A549 (cell line): ENCODE measurements at regions of chr1 and their contacts with region 1.

Region 1: GRCh38 chr1:16625497-16626408 is 12.4 kb upstream of the NBPF1 start:
- DNase-seq: no peak
- ATAC-seq: no peak; a peak in 1 of 6 replicates
- H3K4me3 ChIP-seq: no peak overlapping the region
- H3K27ac ChIP-seq: no peak overlapping the region
- H3K4me1 ChIP-seq: peaks cover 6% of the 10 kb centered on the region
- CTCF ChIP-seq: no peak
- EP300 ChIP-seq: no peak
- POLR2A ChIP-seq: no peak
- RAD21 ChIP-seq: no peak

Region 2: DNA sequence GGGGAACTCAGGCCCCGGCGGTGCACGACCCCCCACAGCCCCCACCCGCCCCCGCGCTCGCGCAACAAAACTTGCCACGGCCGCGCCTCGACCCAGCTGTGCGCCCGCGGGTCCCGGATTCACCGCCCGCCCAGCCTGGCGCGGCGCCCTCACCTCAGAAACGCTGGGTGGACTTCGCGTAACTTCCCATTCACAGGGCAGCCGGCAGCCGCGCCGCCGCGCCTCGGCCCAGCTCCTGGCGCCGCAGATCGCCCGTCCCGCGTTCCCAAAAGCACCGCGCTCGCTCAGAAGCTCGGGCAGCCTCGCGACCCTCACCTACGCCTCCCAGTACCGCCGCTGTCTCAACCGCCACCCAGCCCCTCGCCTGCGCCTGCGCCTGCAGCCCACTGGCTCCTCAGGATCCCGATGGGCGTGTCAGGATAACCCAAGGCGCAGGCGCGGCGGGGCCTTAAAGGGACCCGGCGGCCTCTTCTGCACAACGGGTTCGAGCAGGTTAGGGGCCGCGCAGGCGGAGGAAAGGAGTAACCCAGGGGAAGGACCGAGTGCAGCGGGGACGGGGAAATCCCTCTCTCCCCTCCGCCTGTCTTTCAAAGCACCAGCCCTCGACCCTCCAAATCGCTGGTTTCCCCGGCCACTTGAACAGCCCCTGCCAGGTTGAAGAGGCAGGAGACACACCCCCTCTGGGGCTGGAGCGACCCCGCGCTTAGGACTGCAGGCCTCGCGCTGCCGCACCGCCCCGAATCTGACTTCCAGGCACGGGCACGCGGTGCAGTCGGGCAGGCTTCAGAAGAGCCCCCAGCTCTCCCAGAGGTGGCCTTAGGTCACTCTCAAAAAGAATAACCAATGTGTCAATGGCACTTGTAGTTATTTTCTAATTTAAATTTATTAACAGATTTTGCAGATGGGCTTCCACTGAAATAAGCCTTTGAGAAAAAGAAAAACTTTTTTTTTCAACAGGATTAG is 12.3 kb before region 1 on chr1 and contains the start of gene NBPF1:
- CTCF ChIA-PET with region 1: interaction called, 98 read pairs
- POLR2A ChIA-PET with region 1: interaction called, 6 read pairs
- DNase-seq: peak; percentile 96 to 100
- ATAC-seq: peak; percentile 96 to 99
- H3K4me3 ChIP-seq: peak within 1 kb of the TSS; percentile 70
- H3K27ac ChIP-seq: peak within 1 kb of the TSS; percentile 79 to 84
- H3K4me1 ChIP-seq: peaks cover 15% of the 10 kb centered on the region
- CTCF ChIP-seq: peak; percentile 19; the same call in 1 of the 3 replicates
- EP300 ChIP-seq: no peak
- POLR2A ChIP-seq: peak; percentile 98
- RAD21 ChIP-seq: peak in 1 of 2 experiments; percentile 30; a peak in 2 of 5 replicates
- polyA plus RNA-seq, gene NBPF1: 36.8 and 37.0 TPM in 2 replicates

Region 3: GRCh38 chr1:16644193-16644481 is 18.4 kb after region 1 on chr1:
- CTCF ChIA-PET with region 1: interaction called, 13 read pairs
- POLR2A ChIA-PET with region 1: interaction called, 4 read pairs
- DNase-seq: no peak
- ATAC-seq: peak; percentile 38 to 67; a peak in 5 of 6 replicates
- H3K4me3 ChIP-seq: peak overlapping the region; percentile 64
- H3K27ac ChIP-seq: peak overlapping the region; percentile 84 to 86
- H3K4me1 ChIP-seq: peaks cover 17% of the 10 kb centered on the region
- CTCF ChIP-seq: no peak
- EP300 ChIP-seq: no peak
- POLR2A ChIP-seq: no peak
- RAD21 ChIP-seq: no peak

Region 4: DNA sequence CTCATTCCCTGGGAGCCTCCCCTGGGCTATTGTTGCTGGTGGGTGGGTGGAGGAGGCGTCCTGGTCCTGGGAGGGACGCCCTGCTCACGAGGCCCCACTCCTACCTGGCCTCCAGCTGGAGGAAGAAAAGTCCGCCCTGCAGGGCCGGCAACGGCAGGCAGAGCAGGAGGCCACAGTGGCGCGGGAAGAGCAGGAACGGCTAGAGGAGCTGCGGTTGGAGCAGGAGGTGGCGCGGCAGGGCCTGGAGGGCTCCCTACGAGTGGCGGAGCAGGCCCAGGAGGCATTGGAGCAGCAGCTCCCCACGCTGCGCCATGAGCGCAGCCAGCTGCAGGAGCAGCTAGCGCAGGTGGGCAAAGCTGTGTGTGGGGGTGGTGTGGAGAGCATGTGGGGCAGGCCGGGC is 320.9 kb after region 1 on chr1:
- CTCF ChIA-PET with region 1: interaction called, 43 read pairs
- POLR2A ChIA-PET with region 1: interaction called, 6 read pairs
- DNase-seq: no peak
- ATAC-seq: no peak
- H3K4me3 ChIP-seq: no peak overlapping the region
- H3K27ac ChIP-seq: no peak overlapping the region
- H3K4me1 ChIP-seq: no peaks in the 10 kb centered on the region
- CTCF ChIP-seq: no peak
- EP300 ChIP-seq: no peak
- POLR2A ChIP-seq: no peak
- RAD21 ChIP-seq: no peak